ENCODE measurements at regions of chr7 and their contacts with region 1.

Region 1: GRCh38 chr7:129218514-129219062 is 6.2 kb upstream of the AHCYL2 start:
- DNase-seq: peak; percentile 79
- ATAC-seq: peak; percentile 98
- H3K4me3 ChIP-seq: no peak overlapping the region
- H3K27ac ChIP-seq: no peak overlapping the region
- H3K4me1 ChIP-seq: no peaks in the 10 kb centered on the region
- H3K27me3 ChIP-seq: no peaks in the 10 kb centered on the region
- CTCF ChIP-seq: peak; percentile 95

Region 2: GRCh38 chr7:129163875-129164544 is 54.6 kb before region 1 on chr7:
- intact Hi-C with region 1: loop called (anchors 10 kb)
- DNase-seq: no peak
- ATAC-seq: peak; percentile 46
- H3K4me3 ChIP-seq: no peak overlapping the region
- H3K27ac ChIP-seq: no peak overlapping the region
- H3K4me1 ChIP-seq: no peaks in the 10 kb centered on the region
- H3K27me3 ChIP-seq: peaks cover 29% of the 10 kb centered on the region
- CTCF ChIP-seq: peak; percentile 84

Region 3: GRCh38 chr7:129298268-129298893 is 79.8 kb after region 1 on chr7:
- intact Hi-C with region 1: loop called (anchors 5 kb)
- DNase-seq: no peak
- ATAC-seq: no peak
- H3K4me3 ChIP-seq: no peak overlapping the region
- H3K27ac ChIP-seq: no peak overlapping the region
- H3K4me1 ChIP-seq: peaks cover 7% of the 10 kb centered on the region
- H3K27me3 ChIP-seq: no peaks in the 10 kb centered on the region
- CTCF ChIP-seq: peak; percentile 75

Measured in upper lobe of right lung (tissue), 1 donor.